CD4-positive, alpha-beta T cell (primary cell): ENCODE measurements at regions of chr3 and their contacts with region 1.

Region 1: DNA sequence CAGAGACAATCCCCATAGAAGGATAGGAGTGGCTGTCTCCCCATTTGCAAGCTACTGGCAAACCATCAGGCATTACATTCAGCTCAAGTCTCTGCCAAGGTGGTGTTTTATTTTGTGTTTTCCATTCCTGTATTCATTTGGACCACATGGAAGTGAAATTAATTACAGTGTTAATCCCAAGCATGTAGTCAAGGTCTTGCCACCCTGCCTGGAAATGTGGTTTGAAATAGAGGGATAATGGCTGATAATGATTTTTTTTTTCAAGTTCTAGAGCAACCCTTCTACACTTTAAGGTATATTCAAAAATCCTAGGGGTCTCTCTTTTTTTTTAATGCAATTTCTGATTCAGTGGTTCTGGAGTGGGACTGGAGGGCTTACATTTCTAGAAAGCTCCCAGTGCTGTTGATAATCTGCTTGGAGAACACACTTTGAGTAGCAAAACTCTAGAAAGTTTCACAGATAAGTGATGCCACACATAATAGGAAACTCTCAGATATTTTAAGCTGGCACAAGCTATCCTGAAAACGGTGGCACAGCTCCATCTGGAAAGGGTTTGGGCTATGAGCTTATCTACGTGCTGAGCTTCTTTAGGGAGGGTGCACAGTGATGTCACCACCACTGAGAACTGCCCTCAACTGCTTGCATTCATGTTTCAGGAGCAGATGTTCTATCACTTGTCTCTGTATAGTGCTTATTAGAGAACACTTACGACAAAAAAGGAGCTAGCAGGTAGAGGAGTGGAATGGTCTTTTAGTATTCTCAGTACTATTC is 140.1 kb upstream of the IL12A start:
- DNase-seq: no peak
- ATAC-seq: no peak
- H3K4me3 ChIP-seq: no peak overlapping the region
- H3K4me3 Mint-ChIP-seq: no peak overlapping the region
- H3K27ac ChIP-seq: no peak overlapping the region
- H3K27ac Mint-ChIP-seq: no peak overlapping the region
- H3K4me1 ChIP-seq: no peaks in the 10 kb centered on the region
- H3K4me1 Mint-ChIP-seq: no peaks in the 10 kb centered on the region
- H3K27me3 ChIP-seq: peaks cover 0 to 4% of the 10 kb centered on the region in 2 experiments
- H3K27me3 Mint-ChIP-seq: peaks cover 19% of the 10 kb centered on the region
- CTCF ChIP-seq: no peak

Region 2: DNA sequence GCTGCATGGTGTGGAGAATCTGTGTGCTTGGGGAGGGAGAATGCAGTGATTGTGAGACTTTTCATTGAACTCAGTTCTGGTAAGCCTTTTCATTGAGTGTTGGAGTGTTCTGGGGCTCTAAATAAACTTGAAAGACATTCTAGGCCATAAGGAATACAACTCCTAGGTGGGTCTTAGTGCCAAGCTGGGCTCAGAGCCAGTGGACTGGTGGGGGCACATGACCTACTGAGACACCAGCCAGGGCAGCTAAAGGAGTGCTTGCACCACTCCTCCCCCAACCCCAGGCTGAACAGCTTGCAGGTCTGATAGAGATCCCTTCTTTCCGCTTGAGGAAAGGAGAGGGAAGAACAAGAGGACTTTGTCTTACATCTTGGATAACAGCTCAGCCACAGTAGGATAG is 738.6 kb after region 1 on chr3:
- CTCF ChIA-PET with region 1: no interaction called
- POLR2A ChIA-PET with region 1: no interaction called
- intact Hi-C with region 1: loop called in 1 of 2 experiments (anchors 5 kb)
- DNase-seq: no peak
- ATAC-seq: no peak
- H3K4me3 ChIP-seq: no peak overlapping the region
- H3K4me3 Mint-ChIP-seq: no peak overlapping the region
- H3K27ac ChIP-seq: no peak overlapping the region
- H3K27ac Mint-ChIP-seq: no peak overlapping the region
- H3K4me1 ChIP-seq: no peaks in the 10 kb centered on the region
- H3K4me1 Mint-ChIP-seq: no peaks in the 10 kb centered on the region
- H3K27me3 ChIP-seq: no peaks in the 10 kb centered on the region
- H3K27me3 Mint-ChIP-seq: peaks cover 73% of the 10 kb centered on the region
- CTCF ChIP-seq: no peak

Region 3: DNA sequence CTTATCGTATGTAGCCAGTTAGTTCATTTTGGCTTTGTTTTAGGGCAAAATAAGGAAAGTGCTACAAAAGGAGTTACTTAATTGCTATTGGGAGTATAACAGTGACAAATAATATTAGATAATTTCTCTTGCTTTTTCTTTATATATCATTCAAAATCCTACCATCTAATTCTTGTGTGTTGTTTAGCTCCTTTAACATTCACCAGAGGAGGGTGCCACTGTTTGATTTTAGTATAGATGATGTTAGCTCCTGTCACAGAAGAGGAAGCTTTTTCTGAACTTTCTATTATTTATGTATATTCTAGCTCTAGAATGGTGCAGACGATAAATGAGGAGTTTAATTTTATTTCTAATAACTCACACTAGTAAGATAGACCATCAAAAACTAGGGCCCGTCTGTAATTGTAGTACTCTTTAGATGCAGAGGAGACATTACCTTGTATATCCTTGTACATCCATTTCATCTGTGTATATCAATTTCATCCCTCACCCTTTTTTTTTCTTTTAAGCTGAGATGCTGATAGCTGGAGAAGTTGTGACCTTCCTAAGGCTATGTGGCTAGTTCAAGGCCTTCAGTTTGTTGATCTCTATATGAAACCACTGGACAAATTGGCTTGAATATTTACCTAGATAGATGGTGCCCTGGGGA is 910.5 kb after region 1 on chr3:
- CTCF ChIA-PET with region 1: no interaction called
- POLR2A ChIA-PET with region 1: no interaction called
- intact Hi-C with region 1: no loop called
- DNase-seq: no peak
- ATAC-seq: no peak
- H3K4me3 ChIP-seq: no peak overlapping the region
- H3K4me3 Mint-ChIP-seq: peak overlapping the region; percentile 2
- H3K27ac ChIP-seq: no peak overlapping the region
- H3K27ac Mint-ChIP-seq: no peak overlapping the region
- H3K4me1 ChIP-seq: peaks cover 26% of the 10 kb centered on the region
- H3K4me1 Mint-ChIP-seq: peaks cover 37% of the 10 kb centered on the region
- H3K27me3 ChIP-seq: peaks cover 7% of the 10 kb centered on the region in 2 experiments
- H3K27me3 Mint-ChIP-seq: peaks cover 21% of the 10 kb centered on the region
- CTCF ChIP-seq: no peak